ENCODE measurements at regions of chr1 and their contacts with region 1.

Region 1: GRCh38 chr1:39720094-39720999 is 18.3 kb upstream of the PPIE start:
- DNase-seq: no peak
- H3K4me3 Mint-ChIP-seq: no peak overlapping the region
- H3K27ac Mint-ChIP-seq: peak overlapping the region; percentile 0
- H3K4me1 Mint-ChIP-seq: no peaks in the 10 kb centered on the region
- H3K27me3 Mint-ChIP-seq: peaks cover 41% of the 10 kb centered on the region

Region 2: GRCh38 chr1:39666772-39667171 is 53.6 kb before region 1 on chr1:
- CTCF ChIA-PET with region 1: interaction called, 53 read pairs
- POLR2A ChIA-PET with region 1: no interaction called
- intact Hi-C with region 1: loop called (anchors 5 kb)
- DNase-seq: peak; percentile 71
- H3K4me3 Mint-ChIP-seq: no peak overlapping the region
- H3K27ac Mint-ChIP-seq: peak overlapping the region; percentile 47
- H3K4me1 Mint-ChIP-seq: peaks cover 20% of the 10 kb centered on the region
- H3K27me3 Mint-ChIP-seq: peaks cover 27% of the 10 kb centered on the region

Region 3: GRCh38 chr1:39672551-39672947 is 47.8 kb before region 1 on chr1:
- CTCF ChIA-PET with region 1: interaction called, 53 read pairs
- POLR2A ChIA-PET with region 1: no interaction called
- intact Hi-C with region 1: loop called (anchors 5 kb)
- DNase-seq: peak; percentile 54
- H3K4me3 Mint-ChIP-seq: peak overlapping the region; percentile 36
- H3K27ac Mint-ChIP-seq: no peak overlapping the region
- H3K4me1 Mint-ChIP-seq: peaks cover 3% of the 10 kb centered on the region
- H3K27me3 Mint-ChIP-seq: peaks cover 25% of the 10 kb centered on the region

Region 4: GRCh38 chr1:39680751-39681150 is 39.6 kb before region 1 on chr1:
- CTCF ChIA-PET with region 1: interaction called, 11 read pairs
- POLR2A ChIA-PET with region 1: no interaction called
- intact Hi-C with region 1: no loop called
- DNase-seq: no peak
- H3K4me3 Mint-ChIP-seq: no peak overlapping the region
- H3K27ac Mint-ChIP-seq: no peak overlapping the region
- H3K4me1 Mint-ChIP-seq: peaks cover 18% of the 10 kb centered on the region
- H3K27me3 Mint-ChIP-seq: peaks cover 4% of the 10 kb centered on the region

Measured in activated CD4-positive, alpha-beta memory T cell treated with anti-CD3 and anti-CD28 coated beads for 36 hours (primary cell).